ENCODE measurements at regions of chr6 and their contacts with region 1.

Region 1: GRCh38 chr6:130885392-130886192 is 58.4 kb downstream of the SMLR1 start:
- DNase-seq: peak; percentile 89
- H3K4me3 ChIP-seq: no peak overlapping the region
- H3K27ac ChIP-seq: no peak overlapping the region
- H3K4me1 ChIP-seq: peaks cover 4% of the 10 kb centered on the region
- H3K27me3 ChIP-seq: no peaks in the 10 kb centered on the region
- CTCF ChIP-seq: peak; percentile 89

Region 2: DNA sequence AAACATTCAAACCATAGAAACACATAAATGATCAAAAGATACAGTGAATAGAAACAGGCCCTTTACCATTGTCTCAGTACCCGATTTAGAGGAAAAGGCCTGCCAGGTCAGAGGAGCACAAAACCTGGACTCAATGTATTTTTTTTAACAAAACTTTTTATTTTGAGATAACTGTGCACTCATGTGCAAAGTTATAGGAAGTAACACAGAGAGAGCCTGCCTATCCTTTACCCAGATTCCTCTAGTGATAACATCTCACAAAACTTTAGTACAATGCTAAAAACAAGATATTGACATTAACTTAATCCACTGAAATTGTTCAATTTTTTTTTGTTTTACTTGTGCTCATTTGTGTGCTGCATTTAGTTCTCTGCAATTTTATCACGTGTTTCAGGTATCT is 626.0 kb before region 1 on chr6:
- CTCF ChIA-PET with region 1: no interaction called
- POLR2A ChIA-PET with region 1: no interaction called
- intact Hi-C with region 1: no loop called
- DNase-seq: no peak
- H3K4me3 ChIP-seq: no peak overlapping the region
- H3K27ac ChIP-seq: no peak overlapping the region
- H3K4me1 ChIP-seq: no peaks in the 10 kb centered on the region
- H3K27me3 ChIP-seq: peaks cover 3% of the 10 kb centered on the region
- CTCF ChIP-seq: no peak

Region 3: GRCh38 chr6:131063028-131063763 is 177.6 kb after region 1 on chr6 and contains the start of gene EPB41L2:
- CTCF ChIA-PET with region 1: interaction called, 3 read pairs
- POLR2A ChIA-PET with region 1: no interaction called
- intact Hi-C with region 1: loop called (anchors 5 kb)
- DNase-seq: peak; percentile 96
- H3K4me3 ChIP-seq: peak within 1 kb of the TSS; percentile 93
- H3K27ac ChIP-seq: peak within 1 kb of the TSS; percentile 82
- H3K4me1 ChIP-seq: peaks cover 16% of the 10 kb centered on the region
- H3K27me3 ChIP-seq: no peaks in the 10 kb centered on the region
- CTCF ChIP-seq: no peak
- total RNA-seq, gene EPB41L2: 181 and 232 TPM in 2 replicates

Region 4: DNA sequence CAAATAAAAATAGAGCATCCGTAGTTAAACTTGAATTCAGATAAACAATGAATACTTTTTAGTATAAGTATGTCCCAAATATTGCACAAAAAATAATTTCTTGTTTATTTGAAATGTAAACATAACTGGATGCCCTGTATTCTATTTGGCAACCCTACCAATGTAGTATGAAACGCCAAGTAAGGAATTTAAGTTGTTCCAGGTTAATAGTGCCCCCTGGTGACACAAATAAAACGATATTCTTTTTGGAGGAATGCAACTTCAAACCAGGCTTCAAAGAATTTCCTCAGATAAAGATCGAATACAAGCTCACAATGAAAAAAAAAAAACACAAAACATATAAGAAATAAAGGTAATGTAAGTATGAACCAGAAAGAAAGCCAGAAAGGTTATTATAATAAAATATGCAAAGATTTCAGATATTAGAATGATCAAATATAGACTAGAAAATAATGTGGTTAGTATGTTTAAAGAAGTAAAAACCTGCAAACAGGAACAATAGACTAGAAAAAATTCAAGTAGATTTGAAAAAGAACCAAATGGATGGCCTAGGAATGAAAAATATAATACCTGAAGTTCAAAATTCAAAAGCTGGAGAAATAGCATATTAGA is 231.3 kb after region 1 on chr6:
- CTCF ChIA-PET with region 1: interaction called, 16 read pairs
- POLR2A ChIA-PET with region 1: no interaction called
- intact Hi-C with region 1: loop called (anchors 1 kb)
- DNase-seq: peak; percentile 78
- H3K4me3 ChIP-seq: no peak overlapping the region
- H3K27ac ChIP-seq: no peak overlapping the region
- H3K4me1 ChIP-seq: peaks cover 18% of the 10 kb centered on the region
- H3K27me3 ChIP-seq: no peaks in the 10 kb centered on the region
- CTCF ChIP-seq: peak; percentile 64

Region 5: DNA sequence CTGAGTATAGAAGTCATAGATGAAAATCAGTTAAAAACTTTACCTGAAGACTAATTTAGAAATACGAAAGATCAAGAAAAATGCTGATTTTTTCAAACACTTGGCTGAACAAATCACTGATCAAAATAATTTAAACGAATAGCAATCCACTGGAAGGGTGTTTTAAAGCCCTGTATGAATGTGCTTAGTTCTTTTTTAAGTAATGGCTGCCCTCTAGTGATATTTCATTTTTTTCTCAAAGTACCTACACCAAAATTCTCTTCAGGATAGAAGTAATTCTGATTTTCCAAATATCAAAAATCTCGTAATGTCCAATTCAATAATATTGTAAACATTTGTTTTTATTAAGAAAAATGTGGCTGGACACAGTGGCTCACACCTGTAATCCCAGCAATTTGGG is 282.2 kb after region 1 on chr6:
- CTCF ChIA-PET with region 1: interaction called, 3 read pairs
- POLR2A ChIA-PET with region 1: no interaction called
- intact Hi-C with region 1: loop called (anchors 2 kb)
- DNase-seq: peak; percentile 36
- H3K4me3 ChIP-seq: no peak overlapping the region
- H3K27ac ChIP-seq: no peak overlapping the region
- H3K4me1 ChIP-seq: peaks cover 9% of the 10 kb centered on the region
- H3K27me3 ChIP-seq: no peaks in the 10 kb centered on the region
- CTCF ChIP-seq: peak; percentile 44; the same call in 1 of the 2 replicates

Region 6: GRCh38 chr6:131532580-131533039 is 647.0 kb after region 1 on chr6:
- CTCF ChIA-PET with region 1: interaction called, 10 read pairs
- POLR2A ChIA-PET with region 1: no interaction called
- intact Hi-C with region 1: loop called (anchors 2 kb)
- DNase-seq: peak; percentile 12
- H3K4me3 ChIP-seq: no peak overlapping the region
- H3K27ac ChIP-seq: peak overlapping the region; percentile 69
- H3K4me1 ChIP-seq: peaks cover 26% of the 10 kb centered on the region
- H3K27me3 ChIP-seq: no peaks in the 10 kb centered on the region
- CTCF ChIP-seq: no peak

Region 7: DNA sequence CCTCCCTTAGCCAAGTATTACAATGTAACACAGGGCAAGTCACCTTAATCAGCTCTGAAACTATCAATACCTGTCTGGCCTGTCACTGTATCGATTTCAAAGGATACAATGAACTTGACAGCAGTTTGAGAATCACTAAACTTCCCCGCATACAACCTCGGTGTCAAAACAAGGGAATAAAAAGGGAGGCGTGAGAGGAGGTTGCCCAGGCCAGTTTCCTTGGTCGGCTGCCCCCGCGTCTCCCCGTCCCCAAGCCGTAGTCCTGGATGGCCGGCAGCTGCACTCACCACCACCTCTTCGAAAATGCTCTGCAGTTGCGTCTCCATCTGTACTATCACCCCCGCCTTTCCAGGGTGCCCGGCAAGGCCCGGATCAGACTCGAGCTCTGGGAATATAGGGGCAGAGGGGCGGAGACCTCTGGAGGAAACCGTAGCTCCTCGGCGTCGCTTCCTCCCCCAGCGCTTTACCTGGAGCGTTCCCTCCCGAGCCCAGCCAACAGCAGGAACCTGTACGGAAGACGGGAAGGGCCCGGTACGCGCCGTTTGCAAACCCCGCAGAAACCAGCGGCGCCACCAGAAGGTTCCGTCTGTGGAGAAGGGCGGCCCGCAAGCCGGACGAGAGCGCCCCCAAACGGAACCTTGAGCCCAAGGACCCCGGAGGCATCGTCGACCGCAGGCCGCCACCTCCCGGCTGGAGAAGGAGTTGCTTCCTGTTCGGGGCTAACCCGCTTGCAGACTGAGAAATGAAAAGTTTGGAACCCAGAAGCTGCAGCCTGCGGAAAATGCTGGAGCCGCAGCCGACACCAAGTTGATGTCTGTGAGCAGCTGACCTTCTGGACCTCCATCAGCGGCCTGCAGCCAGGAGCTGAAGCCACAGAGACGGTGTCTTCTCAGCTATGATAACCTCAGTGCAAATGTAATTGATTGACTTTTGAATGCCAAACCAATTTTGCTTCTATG is 742.4 kb after region 1 on chr6 and contains the start of gene MED23:
- CTCF ChIA-PET with region 1: interaction called, 4 read pairs
- POLR2A ChIA-PET with region 1: no interaction called
- intact Hi-C with region 1: loop called (anchors 2 kb)
- DNase-seq: peak; percentile 96
- H3K4me3 ChIP-seq: peak within 1 kb of the TSS; percentile 72
- H3K27ac ChIP-seq: peak within 1 kb of the TSS; percentile 64
- H3K4me1 ChIP-seq: peaks cover 17% of the 10 kb centered on the region
- H3K27me3 ChIP-seq: no peaks in the 10 kb centered on the region
- CTCF ChIP-seq: peak; percentile 100
- total RNA-seq, gene MED23: 31.7 and 32.3 TPM in 2 replicates

Region 8: DNA sequence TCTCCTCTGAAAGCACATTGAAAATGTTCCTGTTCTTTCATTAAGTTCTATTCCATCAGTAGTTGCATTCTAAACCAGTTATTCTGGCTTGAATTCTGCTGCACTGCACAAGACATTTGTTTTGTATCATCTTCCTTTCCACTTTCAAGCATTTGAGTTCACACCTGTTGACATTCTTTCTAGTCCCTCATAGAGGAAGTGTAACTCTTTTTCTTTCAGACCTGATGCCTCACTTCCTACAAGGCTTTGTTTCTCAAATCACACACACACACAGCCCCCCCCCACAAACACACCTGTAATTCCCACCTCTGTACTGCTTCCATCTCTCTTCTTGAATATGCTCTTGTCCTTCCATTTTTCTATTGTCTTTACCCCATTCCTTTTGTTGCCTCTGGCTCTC is 1014.6 kb after region 1 on chr6:
- CTCF ChIA-PET with region 1: no interaction called
- POLR2A ChIA-PET with region 1: no interaction called
- intact Hi-C with region 1: no loop called
- DNase-seq: no peak
- H3K4me3 ChIP-seq: no peak overlapping the region
- H3K27ac ChIP-seq: no peak overlapping the region
- H3K4me1 ChIP-seq: no peaks in the 10 kb centered on the region
- H3K27me3 ChIP-seq: no peaks in the 10 kb centered on the region
- CTCF ChIP-seq: no peak

Measured in A673 (cell line).